ENCODE measurements at regions of chr4 and their contacts with region 1.

Region 1: GRCh38 chr4:17544205-17544604 is 29.2 kb downstream of the CLRN2 start:
- DNase-seq: peak in 1 of 4 experiments; percentile 52
- ATAC-seq: peak; percentile 70
- H3K4me3 ChIP-seq: no peak overlapping the region
- H3K27ac ChIP-seq: no peak overlapping the region; the same call in 2 of the 3 replicates
- H3K4me1 ChIP-seq: peaks cover 0 to 5% of the 10 kb centered on the region in 2 experiments; a peak in 4 of 5 replicates
- H3K27me3 ChIP-seq: no peaks in the 10 kb centered on the region; a peak in 1 of 5 replicates
- CTCF ChIP-seq: no peak
- EP300 ChIP-seq: no peak
- POLR2A ChIP-seq: no peak
- RAD21 ChIP-seq: no peak

Region 2: GRCh38 chr4:17636696-17637622 is 92.8 kb after region 1 on chr4:
- CTCF ChIA-PET with region 1: interaction called, 13 read pairs
- POLR2A ChIA-PET with region 1: interaction called, 3 read pairs
- in situ Hi-C with region 1: no loop called
- intact Hi-C with region 1: loop called (anchors 1 kb)
- DNase-seq: peak; percentile 69 to 86 (median 74)
- ATAC-seq: peak; percentile 99
- H3K4me3 ChIP-seq: no peak overlapping the region
- H3K27ac ChIP-seq: no peak overlapping the region
- H3K4me1 ChIP-seq: peaks cover 3 to 13% of the 10 kb centered on the region in 2 experiments; a peak in 2 of 5 replicates
- H3K27me3 ChIP-seq: no peaks in the 10 kb centered on the region
- CTCF ChIP-seq: peak; percentile 79 to 92 (median 86)
- EP300 ChIP-seq: no peak
- POLR2A ChIP-seq: peak; percentile 48; the same call in 1 of the 2 replicates
- RAD21 ChIP-seq: peak; percentile 63 to 79

Region 3: GRCh38 chr4:17786567-17786966 is 242.4 kb after region 1 on chr4:
- CTCF ChIA-PET with region 1: no interaction called
- POLR2A ChIA-PET with region 1: no interaction called
- in situ Hi-C with region 1: loop called (anchors 10 kb)
- intact Hi-C with region 1: loop called (anchors 2 kb)
- DNase-seq: peak in 1 of 4 experiments; percentile 19
- ATAC-seq: peak; percentile 66
- H3K4me3 ChIP-seq: no peak overlapping the region
- H3K27ac ChIP-seq: no peak overlapping the region
- H3K4me1 ChIP-seq: peaks cover 0 to 3% of the 10 kb centered on the region in 2 experiments; a peak in 1 of 5 replicates
- H3K27me3 ChIP-seq: peaks cover 4 to 11% of the 10 kb centered on the region in 2 experiments; a peak in 3 of 5 replicates
- CTCF ChIP-seq: no peak
- EP300 ChIP-seq: no peak
- POLR2A ChIP-seq: no peak
- RAD21 ChIP-seq: no peak

Region 4: DNA sequence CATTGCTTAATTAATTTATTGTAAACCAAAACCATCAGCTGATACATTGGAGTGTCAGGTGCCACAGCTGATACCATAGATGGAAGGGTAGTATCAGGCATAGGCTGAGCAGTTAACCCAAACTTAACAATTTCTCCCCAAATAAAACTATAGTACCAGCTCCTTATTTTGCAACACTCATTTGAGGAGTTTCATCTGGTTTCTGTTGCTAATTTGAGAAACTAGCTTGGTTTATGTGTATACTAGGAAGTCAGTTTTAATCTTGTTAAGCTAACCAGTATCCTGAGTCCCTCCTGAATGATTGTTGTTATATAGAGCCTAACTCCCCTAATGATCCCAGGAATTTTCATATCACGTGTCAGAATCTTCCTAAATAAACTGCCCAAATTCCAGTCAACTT is 253.6 kb after region 1 on chr4:
- CTCF ChIA-PET with region 1: no interaction called
- POLR2A ChIA-PET with region 1: no interaction called
- in situ Hi-C with region 1: loop called (anchors 10 kb)
- intact Hi-C with region 1: no loop called
- DNase-seq: no peak
- ATAC-seq: no peak
- H3K4me3 ChIP-seq: no peak overlapping the region
- H3K27ac ChIP-seq: no peak overlapping the region
- H3K4me1 ChIP-seq: no peaks in the 10 kb centered on the region
- H3K27me3 ChIP-seq: no peaks in the 10 kb centered on the region
- CTCF ChIP-seq: no peak
- EP300 ChIP-seq: no peak
- POLR2A ChIP-seq: no peak
- RAD21 ChIP-seq: no peak

Region 5: DNA sequence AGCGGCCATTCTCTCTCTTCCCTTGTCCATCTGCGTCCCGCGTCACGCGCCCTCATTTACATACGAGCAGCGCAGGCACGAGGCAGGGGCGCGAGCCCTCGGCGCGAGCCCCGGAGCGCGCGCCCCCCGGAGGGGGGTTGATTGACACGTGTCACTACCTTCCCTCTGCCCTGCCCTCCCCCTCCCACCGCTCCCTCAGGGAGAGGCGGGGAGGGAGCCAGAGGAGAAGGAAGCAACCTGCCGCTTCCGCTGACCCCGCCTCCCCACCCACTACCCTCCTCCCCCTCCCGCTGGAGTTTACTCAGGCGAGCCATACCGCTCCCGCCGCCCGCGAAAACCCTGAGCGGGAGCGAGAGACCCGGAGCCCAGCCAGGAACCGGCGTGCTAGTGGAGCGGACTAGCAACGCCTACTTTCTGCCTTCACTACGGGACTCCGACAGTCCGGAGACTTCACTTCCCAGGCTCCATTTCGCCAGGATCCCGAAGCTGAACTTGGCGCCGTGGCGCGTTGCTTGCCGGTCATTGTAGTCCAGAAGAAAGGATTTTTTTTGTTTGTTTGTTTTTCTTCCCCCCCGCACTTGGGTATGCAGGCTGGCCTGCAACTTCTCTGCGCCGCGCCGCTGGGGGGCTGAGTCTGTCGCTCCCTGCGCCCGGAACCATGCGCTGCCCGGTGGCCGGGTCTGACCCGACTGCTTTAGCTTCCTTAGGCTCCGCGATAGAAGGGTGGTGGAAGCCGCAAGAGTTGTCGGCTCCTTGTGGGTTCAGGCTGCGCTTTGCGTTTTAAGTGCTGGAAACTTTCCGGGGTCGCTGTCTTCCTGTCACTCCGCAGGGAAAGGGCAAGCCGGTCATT is 477.7 kb after region 1 on chr4 and contains the start of gene LCORL:
- CTCF ChIA-PET with region 1: no interaction called
- POLR2A ChIA-PET with region 1: no interaction called
- in situ Hi-C with region 1: no loop called
- intact Hi-C with region 1: loop called (anchors 10 kb)
- DNase-seq: peak; percentile 93 to 97 (median 94)
- ATAC-seq: peak; percentile 88
- H3K4me3 ChIP-seq: peak within 1 kb of the TSS; percentile 94
- H3K27ac ChIP-seq: peak within 1 kb of the TSS; percentile 95
- H3K4me1 ChIP-seq: no peaks in the 10 kb centered on the region; a peak in 1 of 5 replicates
- H3K27me3 ChIP-seq: no peaks in the 10 kb centered on the region
- CTCF ChIP-seq: peak; percentile 17 to 40 (median 33); a peak in 3 of 6 replicates
- EP300 ChIP-seq: peak; percentile 11; the same call in 1 of the 2 replicates
- POLR2A ChIP-seq: peak; percentile 79
- RAD21 ChIP-seq: peak in 1 of 2 experiments; percentile 9; a peak in 1 of 4 replicates
- polyA plus RNA-seq, gene LCORL: 3.1 to 4.3 TPM

Region 6: GRCh38 chr4:18593445-18594002 is 1049.3 kb after region 1 on chr4:
- CTCF ChIA-PET with region 1: interaction called, 3 read pairs
- POLR2A ChIA-PET with region 1: no interaction called
- in situ Hi-C with region 1: loop called (anchors 25 kb)
- intact Hi-C with region 1: loop called (anchors 1 kb)
- DNase-seq: peak; percentile 61 to 74 (median 66)
- ATAC-seq: peak; percentile 87
- H3K4me3 ChIP-seq: no peak overlapping the region
- H3K27ac ChIP-seq: no peak overlapping the region
- H3K4me1 ChIP-seq: no peaks in the 10 kb centered on the region
- H3K27me3 ChIP-seq: no peaks in the 10 kb centered on the region
- CTCF ChIP-seq: peak; percentile 67 to 85 (median 76)
- EP300 ChIP-seq: no peak
- POLR2A ChIP-seq: no peak
- RAD21 ChIP-seq: peak; percentile 81 to 83